ENCODE measurements at regions of chr7 and their contacts with region 1.

Region 1: GRCh38 chr7:6197801-6198551 is 74.4 kb downstream of the CYTH3 start:
- DNase-seq: no peak
- ATAC-seq: no peak
- H3K4me3 ChIP-seq: no peak overlapping the region
- H3K27ac ChIP-seq: no peak overlapping the region
- H3K4me1 ChIP-seq: no peaks in the 10 kb centered on the region
- H3K27me3 ChIP-seq: no peaks in the 10 kb centered on the region
- CTCF ChIP-seq: no peak

Region 2: DNA sequence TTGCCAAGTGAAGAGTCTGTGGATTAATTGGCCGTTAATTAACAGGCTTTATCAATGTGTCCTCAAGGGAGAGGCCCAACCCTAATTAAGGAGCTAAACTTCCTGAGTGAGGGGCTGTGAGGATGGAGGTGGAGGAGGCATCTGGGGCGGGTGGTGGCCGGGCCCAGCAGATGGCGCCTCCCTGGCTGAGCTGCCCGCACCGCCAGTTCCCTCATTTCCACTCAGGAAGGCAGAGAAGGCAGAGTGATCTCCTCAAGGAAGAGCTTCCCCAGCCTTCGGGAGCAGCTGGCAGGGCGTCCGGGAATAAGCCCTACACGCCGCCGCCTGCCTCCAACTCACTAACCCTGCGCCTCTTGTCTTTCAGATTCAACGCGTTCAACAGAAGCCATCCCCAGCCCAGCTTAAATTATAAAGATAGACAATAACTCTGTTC is 37.8 kb before region 1 on chr7:
- CTCF ChIA-PET with region 1: no interaction called
- POLR2A ChIA-PET with region 1: no interaction called
- intact Hi-C with region 1: no loop called
- DNase-seq: peak; percentile 42
- ATAC-seq: peak; percentile 78
- H3K4me3 ChIP-seq: no peak overlapping the region
- H3K27ac ChIP-seq: no peak overlapping the region
- H3K4me1 ChIP-seq: no peaks in the 10 kb centered on the region
- H3K27me3 ChIP-seq: no peaks in the 10 kb centered on the region
- CTCF ChIP-seq: peak; percentile 69

Region 3: DNA sequence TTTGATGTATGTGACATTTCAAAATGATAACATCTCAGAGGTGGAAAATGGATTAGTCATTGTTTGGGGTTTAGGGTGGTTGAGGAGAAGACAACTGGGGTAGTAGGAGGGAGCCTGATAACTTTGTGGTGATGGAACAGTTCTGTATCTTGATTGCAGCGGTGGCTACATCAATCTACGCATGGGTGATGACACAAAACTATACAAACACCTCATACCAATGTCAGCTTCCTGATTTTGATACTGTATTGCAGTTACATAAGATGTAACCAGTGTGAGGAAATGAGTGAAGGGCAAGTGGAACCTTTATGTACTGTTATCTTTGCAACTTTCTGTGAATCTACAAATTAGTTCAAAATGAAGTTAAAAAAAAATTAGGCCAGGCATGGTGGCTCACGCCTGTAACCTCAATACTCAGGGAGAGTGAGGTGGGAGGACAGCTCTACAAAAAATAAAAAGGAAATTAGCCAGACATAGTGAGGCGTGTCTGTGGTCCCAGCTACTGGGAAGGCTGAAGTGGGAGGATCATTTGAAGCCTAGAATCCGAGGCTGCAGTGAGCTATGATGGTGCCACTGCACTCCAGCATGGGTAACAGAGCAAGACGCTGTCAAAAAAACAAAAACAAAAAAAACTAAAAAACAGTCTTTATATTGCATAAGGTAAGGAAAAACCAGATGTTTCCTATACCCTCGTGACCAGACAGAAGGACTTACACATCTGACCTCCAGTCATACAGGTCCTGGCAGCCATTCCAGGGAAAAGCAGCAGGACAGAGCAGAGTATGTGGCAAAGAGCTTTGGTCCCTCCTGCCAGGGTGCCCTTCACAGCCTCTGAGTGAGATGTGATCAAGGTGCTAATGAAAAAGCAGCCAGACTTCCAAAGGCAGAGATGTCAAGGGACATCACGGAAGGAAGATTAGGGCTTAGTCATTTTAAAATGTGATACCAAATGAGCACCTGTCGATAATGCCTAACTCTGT is 23.7 kb after region 1 on chr7:
- CTCF ChIA-PET with region 1: interaction called, 12 read pairs
- POLR2A ChIA-PET with region 1: no interaction called
- intact Hi-C with region 1: no loop called
- DNase-seq: no peak
- ATAC-seq: no peak
- H3K4me3 ChIP-seq: no peak overlapping the region
- H3K27ac ChIP-seq: no peak overlapping the region
- H3K4me1 ChIP-seq: no peaks in the 10 kb centered on the region
- H3K27me3 ChIP-seq: no peaks in the 10 kb centered on the region
- CTCF ChIP-seq: no peak

Measured in PC-3 (cell line).